ENCODE measurements at regions of chr6 and their contacts with region 1.

Region 1: GRCh38 chr6:34196126-34196830 is 40.4 kb upstream of the HMGA1 start:
- DNase-seq: peak; percentile 77 to 96 (median 89)
- ATAC-seq: peak; percentile 99
- H3K4me3 Mint-ChIP-seq: peak overlapping the region; percentile 84 to 88 (median 86)
- H3K27ac Mint-ChIP-seq: peak overlapping the region in 7 of 10 donors; percentile 26 to 89 (median 89)
- H3K4me1 Mint-ChIP-seq: peaks cover 0 to 9% (median 6%) of the 10 kb centered on the region in 4 donors
- H3K27me3 Mint-ChIP-seq: no peaks in the 10 kb centered on the region

Region 2: GRCh38 chr6:34170346-34170745 is 25.9 kb before region 1 on chr6:
- POLR2A ChIA-PET with region 1: no interaction called
- DNase-seq: no peak
- ATAC-seq: no peak
- H3K4me3 Mint-ChIP-seq: no peak overlapping the region
- H3K27ac Mint-ChIP-seq: peak overlapping the region in 1 of 10 donors; percentile 49
- H3K4me1 Mint-ChIP-seq: peaks cover 3 to 18% (median 14%) of the 10 kb centered on the region in 4 donors
- H3K27me3 Mint-ChIP-seq: no peaks in the 10 kb centered on the region

Region 3: DNA sequence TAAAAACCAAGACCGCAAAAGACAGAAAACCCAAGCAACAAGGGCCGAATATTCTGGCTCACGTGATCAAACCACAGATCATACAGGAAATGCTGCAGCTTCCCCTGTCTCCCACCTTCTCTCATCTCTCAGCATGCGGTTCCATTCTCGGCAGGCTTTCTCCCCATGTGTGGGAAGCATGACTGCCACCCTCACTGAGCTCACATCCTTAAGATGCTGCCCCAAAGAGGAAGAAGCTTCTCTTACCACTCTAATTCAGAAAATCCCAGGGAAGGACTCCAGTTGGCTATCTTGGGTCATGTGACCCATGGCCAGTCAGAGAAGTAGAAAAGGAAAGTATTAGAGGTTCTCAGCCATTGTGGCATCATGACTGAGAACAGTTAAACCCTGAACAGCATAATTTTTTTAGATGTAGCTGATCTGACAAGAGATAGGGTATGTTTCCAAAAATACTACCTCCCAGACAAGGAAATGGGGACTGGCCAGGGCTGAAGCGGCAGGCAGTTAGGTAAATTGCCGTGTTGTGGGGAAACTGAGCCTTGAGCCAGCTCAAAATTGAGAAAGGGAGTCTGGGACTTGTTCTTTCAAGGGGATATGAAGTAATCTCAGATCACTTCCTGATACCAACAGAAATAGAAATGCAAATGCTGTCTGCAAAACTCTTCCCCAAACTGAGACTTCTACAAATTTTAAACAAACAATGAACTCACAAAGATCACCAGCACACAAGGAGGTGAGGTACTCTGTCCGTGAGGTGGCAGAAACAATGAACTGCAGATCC is 13.3 kb before region 1 on chr6:
- POLR2A ChIA-PET with region 1: interaction called, 12 read pairs
- DNase-seq: peak in 9 of 10 donors; percentile 53 to 84 (median 70)
- ATAC-seq: peak; percentile 94 to 98
- H3K4me3 Mint-ChIP-seq: peak overlapping the region; percentile 56 to 82 (median 75)
- H3K27ac Mint-ChIP-seq: peak overlapping the region; percentile 6 to 94 (median 90)
- H3K4me1 Mint-ChIP-seq: peaks cover 17 to 50% (median 36%) of the 10 kb centered on the region in 4 donors
- H3K27me3 Mint-ChIP-seq: no peaks in the 10 kb centered on the region

Region 4: GRCh38 chr6:34236131-34236996 is 40.1 kb after region 1 on chr6 and contains the start of gene HMGA1:
- POLR2A ChIA-PET with region 1: interaction called, 18 read pairs
- DNase-seq: peak; percentile 78 to 94 (median 86)
- ATAC-seq: peak; percentile 68 to 75
- H3K4me3 Mint-ChIP-seq: peak within 1 kb of the TSS; percentile 88 to 97 (median 94)
- H3K27ac Mint-ChIP-seq: peak within 1 kb of the TSS; percentile 94 to 99 (median 98)
- H3K4me1 Mint-ChIP-seq: peaks cover 13 to 46% (median 37%) of the 10 kb centered on the region in 4 donors
- H3K27me3 Mint-ChIP-seq: no peaks in the 10 kb centered on the region
- polyA plus RNA-seq, gene HMGA1: 28.0 to 40.9 (median 38.1) TPM

Region 5: GRCh38 chr6:34414999-34415858 is 219.0 kb after region 1 on chr6:
- POLR2A ChIA-PET with region 1: interaction called, 13 read pairs
- DNase-seq: peak in 9 of 10 donors; percentile 21 to 72 (median 35)
- ATAC-seq: peak; percentile 76 to 86
- H3K4me3 Mint-ChIP-seq: no peak overlapping the region
- H3K27ac Mint-ChIP-seq: peak overlapping the region in 4 of 10 donors; percentile 6 to 75 (median 53)
- H3K4me1 Mint-ChIP-seq: peaks cover 0 to 14% (median 9%) of the 10 kb centered on the region in 4 donors
- H3K27me3 Mint-ChIP-seq: no peaks in the 10 kb centered on the region